Panc1 (cell line): ENCODE measurements at regions of chrX and their contacts with region 1.

Region 1: DNA sequence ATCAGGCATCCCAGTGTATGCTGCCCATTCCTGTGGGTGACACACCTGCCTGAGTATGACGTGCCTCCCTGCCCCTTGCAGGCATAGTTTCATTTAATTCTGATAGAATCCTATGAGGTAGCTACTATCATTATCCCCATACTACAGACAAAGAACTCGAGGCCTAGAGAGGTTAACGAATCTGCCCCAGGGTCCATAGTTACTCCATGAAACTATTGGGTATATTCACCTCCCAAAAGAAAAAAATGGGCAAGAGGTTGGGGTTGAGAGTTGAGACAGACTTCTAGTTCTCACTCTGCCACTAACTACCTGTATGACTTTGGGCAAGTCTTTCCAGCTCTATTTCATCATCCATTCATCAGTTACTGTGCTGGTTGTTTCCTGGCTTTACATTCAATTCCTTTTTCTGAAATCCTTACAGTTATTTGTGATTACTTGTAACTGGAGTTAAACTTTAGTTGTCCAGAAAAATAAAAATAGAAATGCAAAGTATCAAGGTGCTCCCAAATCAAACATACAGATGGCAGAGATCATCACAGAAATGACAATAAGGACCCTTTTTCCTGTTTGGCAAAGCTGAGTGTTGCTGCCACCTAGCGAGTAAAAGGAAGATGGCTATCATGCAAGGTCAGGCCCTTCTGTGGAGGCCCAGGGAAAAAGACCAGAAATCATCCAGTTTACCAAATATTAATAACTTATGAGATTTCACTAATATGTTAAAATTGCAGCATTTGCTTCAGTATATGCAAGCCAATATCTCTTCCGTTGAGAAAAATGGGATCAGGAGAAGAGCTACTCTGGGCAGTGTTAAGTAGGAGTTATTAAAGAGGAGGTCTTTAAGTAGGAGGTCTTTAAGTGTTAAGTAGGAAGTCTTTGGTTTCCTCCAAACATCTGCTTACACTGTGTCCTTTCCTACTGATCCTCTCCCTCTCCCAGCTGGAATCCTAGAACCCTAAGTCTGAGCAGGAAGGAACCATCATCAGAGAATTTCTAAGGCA is 17.1 kb upstream of the MAP7D3 start:
- DNase-seq: no peak
- ATAC-seq: peak; percentile 89
- H3K4me3 ChIP-seq: no peak overlapping the region
- H3K27ac ChIP-seq: no peak overlapping the region; the same call in 1 of the 2 replicates
- H3K4me1 ChIP-seq: no peaks in the 10 kb centered on the region
- H3K27me3 ChIP-seq: peaks cover 5% of the 10 kb centered on the region; the same call in 1 of the 2 replicates
- CTCF ChIP-seq: peak; percentile 86

Region 2: DNA sequence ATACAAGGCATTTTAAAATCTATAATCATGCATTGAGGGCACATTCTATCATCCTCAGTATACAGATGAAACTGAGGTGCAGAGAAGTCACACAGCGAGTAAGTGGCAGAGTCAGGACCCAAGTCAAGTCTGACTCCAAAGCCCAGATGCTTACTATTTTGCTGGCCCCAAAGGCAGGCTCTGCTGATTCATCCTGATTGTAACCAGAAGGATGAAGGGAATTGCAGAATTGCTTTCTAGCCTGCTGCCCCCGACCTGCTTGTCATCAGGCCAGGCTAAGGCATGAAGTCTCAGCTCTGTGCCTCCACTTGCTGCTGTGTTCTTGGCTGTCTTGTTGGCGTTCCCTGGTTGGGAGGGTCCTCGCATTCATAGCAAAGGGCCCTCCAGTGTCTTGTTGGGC is 220.4 kb before region 1 on chrX:
- CTCF ChIA-PET with region 1: no interaction called
- POLR2A ChIA-PET with region 1: no interaction called
- in situ Hi-C with region 1: no loop called
- intact Hi-C with region 1: no loop called
- DNase-seq: no peak
- ATAC-seq: peak; percentile 23; the same call in 1 of the 2 replicates
- H3K4me3 ChIP-seq: no peak overlapping the region
- H3K27ac ChIP-seq: no peak overlapping the region
- H3K4me1 ChIP-seq: peaks cover 7% of the 10 kb centered on the region; the same call in 1 of the 2 replicates
- H3K27me3 ChIP-seq: no peaks in the 10 kb centered on the region
- CTCF ChIP-seq: no peak

Region 3: DNA sequence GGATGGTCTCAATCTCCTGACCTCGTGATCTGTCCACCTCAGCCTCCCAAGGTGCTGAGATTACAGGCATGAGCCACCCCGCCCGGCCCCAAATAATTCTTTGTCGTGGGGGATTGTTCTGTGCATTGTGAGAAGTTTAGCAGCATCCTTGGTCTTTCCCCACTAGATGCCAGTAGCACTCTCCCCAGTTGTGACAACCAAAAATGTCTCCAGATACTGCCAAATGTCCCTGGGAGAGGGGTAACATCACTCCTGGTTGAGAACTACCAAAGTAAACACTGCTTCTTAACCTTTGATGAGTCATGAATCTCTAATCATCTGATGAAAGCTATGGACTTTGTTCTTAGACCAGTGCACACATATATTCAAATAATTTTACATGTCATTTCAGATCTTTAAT is 128.7 kb after region 1 on chrX:
- CTCF ChIA-PET with region 1: interaction called, 11 read pairs
- POLR2A ChIA-PET with region 1: no interaction called
- in situ Hi-C with region 1: no loop called
- intact Hi-C with region 1: no loop called
- DNase-seq: no peak
- ATAC-seq: no peak
- H3K4me3 ChIP-seq: no peak overlapping the region
- H3K27ac ChIP-seq: no peak overlapping the region
- H3K4me1 ChIP-seq: no peaks in the 10 kb centered on the region
- H3K27me3 ChIP-seq: peaks cover 4% of the 10 kb centered on the region; the same call in 1 of the 2 replicates
- CTCF ChIP-seq: no peak

Region 4: GRCh38 chrX:136473663-136474062 is 205.3 kb after region 1 on chrX:
- CTCF ChIA-PET with region 1: no interaction called
- POLR2A ChIA-PET with region 1: no interaction called
- in situ Hi-C with region 1: no loop called
- intact Hi-C with region 1: no loop called
- DNase-seq: no peak
- ATAC-seq: no peak
- H3K4me3 ChIP-seq: no peak overlapping the region
- H3K27ac ChIP-seq: no peak overlapping the region
- H3K4me1 ChIP-seq: no peaks in the 10 kb centered on the region
- H3K27me3 ChIP-seq: no peaks in the 10 kb centered on the region
- CTCF ChIP-seq: no peak

Region 5: DNA sequence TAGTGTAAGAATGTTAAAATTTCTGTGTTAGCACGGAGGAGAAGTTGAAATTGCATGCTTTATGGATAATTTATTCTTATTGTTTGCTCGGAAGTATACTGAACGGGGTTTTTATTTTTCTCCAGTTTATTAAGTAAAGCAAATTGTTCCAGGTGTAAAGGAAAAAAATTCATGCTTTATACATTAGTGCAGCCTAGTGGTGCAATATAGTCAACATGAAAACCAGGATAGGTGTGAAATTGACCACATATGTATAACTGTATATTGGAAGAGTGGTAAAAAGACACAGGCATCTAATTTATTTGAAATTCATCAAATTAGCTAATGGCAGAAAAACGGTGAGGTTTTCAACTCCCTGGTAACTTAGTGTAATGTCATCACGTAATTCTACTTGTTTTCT is 220.4 kb after region 1 on chrX:
- CTCF ChIA-PET with region 1: no interaction called
- POLR2A ChIA-PET with region 1: no interaction called
- in situ Hi-C with region 1: no loop called
- intact Hi-C with region 1: loop called (anchors 10 kb)
- DNase-seq: no peak
- ATAC-seq: no peak
- H3K4me3 ChIP-seq: no peak overlapping the region
- H3K27ac ChIP-seq: no peak overlapping the region
- H3K4me1 ChIP-seq: no peaks in the 10 kb centered on the region
- H3K27me3 ChIP-seq: peaks cover 38% of the 10 kb centered on the region
- CTCF ChIP-seq: peak; percentile 19; the same call in 1 of the 2 replicates